IMR-90 (cell line): ENCODE measurements at regions of chr2 and their contacts with region 1.

Region 1: GRCh38 chr2:160970052-160970965 is 189.9 kb upstream of the TANK start:
- DNase-seq: peak; percentile 82
- ATAC-seq: peak; percentile 82
- H3K4me3 ChIP-seq: no peak overlapping the region
- H3K27ac ChIP-seq: peak overlapping the region; percentile 57; the same call in 1 of the 2 replicates
- H3K4me1 ChIP-seq: peaks cover 2% of the 10 kb centered on the region; the same call in 1 of the 2 replicates
- H3K27me3 ChIP-seq: no peaks in the 10 kb centered on the region
- CTCF ChIP-seq: peak; percentile 86
- POLR2A ChIP-seq: no peak
- RAD21 ChIP-seq: peak; percentile 88

Region 2: DNA sequence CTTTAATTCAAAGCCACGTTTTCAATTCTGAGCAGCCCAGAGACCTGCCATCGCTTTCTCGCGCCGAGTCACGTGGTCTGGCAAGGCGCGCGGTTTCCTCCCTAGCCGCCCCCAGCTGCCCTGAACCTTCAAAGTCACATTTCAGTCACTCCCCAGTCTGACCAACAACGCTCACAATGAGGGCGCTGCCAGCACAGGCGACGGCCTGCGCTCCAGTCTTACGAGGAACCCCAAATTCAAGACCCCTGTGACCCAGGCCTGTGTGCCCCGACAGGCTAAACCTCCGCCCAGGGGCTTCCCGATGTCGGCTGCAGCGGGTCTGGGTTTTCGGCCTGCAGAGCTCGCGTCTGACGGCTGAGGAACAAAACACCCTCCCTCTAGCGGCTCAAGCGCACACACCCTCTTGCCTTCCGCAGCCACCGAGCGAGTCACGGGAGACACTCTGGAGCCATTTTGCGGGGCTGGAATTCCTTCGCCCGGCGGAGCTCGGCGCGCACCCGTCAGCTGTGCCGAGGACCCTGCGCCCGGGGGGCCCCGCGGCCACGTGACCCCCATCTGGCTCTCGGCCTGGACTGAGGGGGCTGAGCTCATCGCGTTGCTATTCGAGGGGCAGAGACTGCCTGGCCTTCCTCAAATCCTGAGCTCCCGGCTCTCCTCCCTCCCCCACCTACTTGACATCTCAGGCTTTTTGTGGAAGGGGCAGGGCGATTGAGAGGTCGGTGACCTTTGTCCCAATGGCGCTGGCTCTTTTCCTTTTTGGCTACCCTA is 700.3 kb before region 1 on chr2:
- CTCF ChIA-PET with region 1: interaction called, 8 read pairs
- POLR2A ChIA-PET with region 1: interaction called, 5 read pairs
- dilution Hi-C with region 1: no loop called
- in situ Hi-C with region 1: no loop called
- intact Hi-C with region 1: loop called (anchors 1 kb)
- DNase-seq: peak; percentile 92
- ATAC-seq: peak; percentile 91
- H3K4me3 ChIP-seq: peak overlapping the region; percentile 43
- H3K27ac ChIP-seq: peak overlapping the region; percentile 86
- H3K4me1 ChIP-seq: peaks cover 20% of the 10 kb centered on the region
- H3K27me3 ChIP-seq: no peaks in the 10 kb centered on the region
- CTCF ChIP-seq: peak; percentile 68
- POLR2A ChIP-seq: no peak
- RAD21 ChIP-seq: peak; percentile 57

Region 3: DNA sequence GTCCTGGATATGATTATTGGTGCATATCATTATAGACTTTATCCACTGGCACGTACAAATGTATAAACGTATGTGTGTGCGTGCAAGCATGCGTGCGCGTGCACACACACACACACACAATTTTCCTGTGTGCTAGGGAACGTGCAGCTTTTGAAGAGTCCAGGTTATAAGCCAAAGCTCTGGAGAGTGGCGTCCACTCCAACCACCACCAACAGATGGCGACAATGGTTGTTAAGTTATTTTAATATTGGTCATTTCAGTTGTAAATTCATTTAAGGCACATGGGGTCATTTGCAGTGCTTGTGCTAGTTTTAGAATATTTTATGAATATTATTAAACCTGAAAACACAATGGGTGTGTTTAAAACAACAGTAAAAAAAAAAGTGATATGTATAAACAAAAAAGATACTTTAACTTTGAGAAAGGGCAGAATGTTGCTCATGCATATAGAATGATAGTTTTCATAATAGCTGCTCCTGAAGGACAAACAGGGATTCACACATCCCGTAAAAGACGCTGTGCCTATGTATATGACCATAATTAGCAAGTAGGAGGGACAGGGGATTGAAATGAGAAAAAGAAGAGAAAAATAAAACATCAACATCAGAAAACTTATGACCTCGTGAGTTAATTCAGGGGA is 646.0 kb before region 1 on chr2:
- CTCF ChIA-PET with region 1: interaction called, 3 read pairs
- POLR2A ChIA-PET with region 1: no interaction called
- dilution Hi-C with region 1: no loop called
- in situ Hi-C with region 1: no loop called
- intact Hi-C with region 1: loop called (anchors 5 kb)
- DNase-seq: peak; percentile 70
- ATAC-seq: peak; percentile 69
- H3K4me3 ChIP-seq: no peak overlapping the region
- H3K27ac ChIP-seq: no peak overlapping the region
- H3K4me1 ChIP-seq: peaks cover 19% of the 10 kb centered on the region
- H3K27me3 ChIP-seq: no peaks in the 10 kb centered on the region
- CTCF ChIP-seq: peak; percentile 71
- POLR2A ChIP-seq: no peak
- RAD21 ChIP-seq: peak; percentile 73

Region 4: DNA sequence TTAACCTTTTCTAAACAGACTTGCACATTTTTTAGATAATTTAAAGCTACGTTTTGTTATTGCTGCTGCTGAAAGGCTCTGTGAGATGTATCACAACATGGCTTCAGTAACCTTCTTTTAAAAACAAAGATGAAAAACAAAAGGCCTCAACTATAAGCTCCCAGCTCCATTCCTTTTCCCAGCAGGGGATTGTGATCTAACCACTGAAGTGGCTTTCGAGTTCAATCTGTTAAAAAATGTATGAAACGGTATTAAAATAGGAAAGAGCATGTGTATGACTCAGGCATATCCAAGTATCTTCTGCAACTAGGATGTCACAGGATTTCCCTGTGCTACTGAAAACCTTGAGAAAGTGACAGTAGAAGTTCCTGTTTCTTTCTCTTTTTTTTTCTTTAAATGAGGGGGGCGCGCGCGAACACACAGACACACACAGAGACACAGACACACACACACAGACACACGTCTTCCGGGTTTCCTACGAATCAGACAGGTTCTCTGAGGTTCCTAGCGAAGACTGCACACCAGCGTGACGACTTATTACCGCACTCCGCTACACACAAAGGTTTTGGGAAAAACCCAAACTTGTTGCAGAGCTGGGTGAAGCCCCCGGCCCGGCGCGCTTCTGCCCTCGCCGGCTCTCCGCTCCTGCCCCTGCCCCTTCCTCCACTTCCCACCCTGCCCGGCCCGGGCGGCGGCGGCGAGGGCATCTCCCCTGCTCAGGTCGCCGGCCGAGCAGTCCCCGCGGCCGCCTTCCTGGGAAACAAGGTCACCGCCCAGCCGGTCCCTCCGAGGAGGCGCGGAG is 563.5 kb before region 1 on chr2:
- CTCF ChIA-PET with region 1: interaction called, 3 read pairs
- POLR2A ChIA-PET with region 1: no interaction called
- dilution Hi-C with region 1: no loop called
- in situ Hi-C with region 1: loop called (anchors 10 kb)
- intact Hi-C with region 1: loop called (anchors 1 kb)
- DNase-seq: peak; percentile 80
- ATAC-seq: peak; percentile 12
- H3K4me3 ChIP-seq: peak overlapping the region; percentile 99
- H3K27ac ChIP-seq: peak overlapping the region; percentile 89
- H3K4me1 ChIP-seq: peaks cover 35% of the 10 kb centered on the region
- H3K27me3 ChIP-seq: no peaks in the 10 kb centered on the region
- CTCF ChIP-seq: no peak
- POLR2A ChIP-seq: peak; percentile 49
- RAD21 ChIP-seq: 0 out of 2 replicates have a peak, but pooled peaks have one; percentile 1

Region 5: GRCh38 chr2:160429248-160430000 is 540.9 kb before region 1 on chr2:
- CTCF ChIA-PET with region 1: interaction called, 3 read pairs
- POLR2A ChIA-PET with region 1: no interaction called
- dilution Hi-C with region 1: no loop called
- in situ Hi-C with region 1: no loop called
- intact Hi-C with region 1: loop called (anchors 1 kb)
- DNase-seq: peak; percentile 75
- ATAC-seq: no peak
- H3K4me3 ChIP-seq: no peak overlapping the region
- H3K27ac ChIP-seq: peak overlapping the region; percentile 56; the same call in 1 of the 2 replicates
- H3K4me1 ChIP-seq: peaks cover 16% of the 10 kb centered on the region
- H3K27me3 ChIP-seq: no peaks in the 10 kb centered on the region
- CTCF ChIP-seq: peak; percentile 56
- POLR2A ChIP-seq: no peak
- RAD21 ChIP-seq: peak; percentile 49

Region 6: DNA sequence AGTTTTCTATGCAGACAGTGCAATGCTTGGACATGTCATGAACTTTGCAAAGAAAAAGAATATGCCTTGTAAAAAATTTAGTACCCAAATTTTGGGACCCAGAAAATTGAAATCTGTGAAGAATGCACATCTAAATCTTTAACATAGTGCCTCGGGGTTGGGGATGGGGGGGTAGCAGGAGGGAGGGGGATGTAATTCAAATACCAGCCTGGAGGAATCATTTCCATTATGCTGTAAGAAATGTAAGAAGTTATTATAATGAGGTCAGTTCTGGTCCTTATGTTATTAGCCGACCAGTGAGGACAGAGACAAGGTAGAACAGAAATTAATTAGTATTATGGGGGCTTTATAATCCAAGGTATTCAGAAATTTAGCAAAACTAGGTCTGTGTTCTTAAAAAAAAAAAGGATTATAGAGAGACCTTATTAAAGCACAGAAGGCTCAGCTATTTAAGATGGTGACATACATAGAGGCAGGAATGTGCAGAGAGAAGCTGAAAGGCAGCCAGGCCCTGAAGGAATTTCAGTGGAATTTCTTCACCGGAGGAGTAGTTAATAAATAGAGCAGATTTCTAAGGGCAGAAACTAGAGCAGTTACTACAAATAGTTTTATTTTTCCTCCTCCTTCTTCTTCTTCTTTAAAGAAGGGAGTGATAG is 387.7 kb before region 1 on chr2:
- CTCF ChIA-PET with region 1: no interaction called
- POLR2A ChIA-PET with region 1: no interaction called
- dilution Hi-C with region 1: no loop called
- in situ Hi-C with region 1: no loop called
- intact Hi-C with region 1: loop called (anchors 5 kb)
- DNase-seq: peak; percentile 75
- ATAC-seq: peak; percentile 81
- H3K4me3 ChIP-seq: no peak overlapping the region
- H3K27ac ChIP-seq: peak overlapping the region; percentile 70; the same call in 1 of the 2 replicates
- H3K4me1 ChIP-seq: peaks cover 18% of the 10 kb centered on the region
- H3K27me3 ChIP-seq: no peaks in the 10 kb centered on the region
- CTCF ChIP-seq: 0 out of 2 replicates have a peak, but pooled peaks have one; percentile 2
- POLR2A ChIP-seq: no peak
- RAD21 ChIP-seq: no peak

Region 7: DNA sequence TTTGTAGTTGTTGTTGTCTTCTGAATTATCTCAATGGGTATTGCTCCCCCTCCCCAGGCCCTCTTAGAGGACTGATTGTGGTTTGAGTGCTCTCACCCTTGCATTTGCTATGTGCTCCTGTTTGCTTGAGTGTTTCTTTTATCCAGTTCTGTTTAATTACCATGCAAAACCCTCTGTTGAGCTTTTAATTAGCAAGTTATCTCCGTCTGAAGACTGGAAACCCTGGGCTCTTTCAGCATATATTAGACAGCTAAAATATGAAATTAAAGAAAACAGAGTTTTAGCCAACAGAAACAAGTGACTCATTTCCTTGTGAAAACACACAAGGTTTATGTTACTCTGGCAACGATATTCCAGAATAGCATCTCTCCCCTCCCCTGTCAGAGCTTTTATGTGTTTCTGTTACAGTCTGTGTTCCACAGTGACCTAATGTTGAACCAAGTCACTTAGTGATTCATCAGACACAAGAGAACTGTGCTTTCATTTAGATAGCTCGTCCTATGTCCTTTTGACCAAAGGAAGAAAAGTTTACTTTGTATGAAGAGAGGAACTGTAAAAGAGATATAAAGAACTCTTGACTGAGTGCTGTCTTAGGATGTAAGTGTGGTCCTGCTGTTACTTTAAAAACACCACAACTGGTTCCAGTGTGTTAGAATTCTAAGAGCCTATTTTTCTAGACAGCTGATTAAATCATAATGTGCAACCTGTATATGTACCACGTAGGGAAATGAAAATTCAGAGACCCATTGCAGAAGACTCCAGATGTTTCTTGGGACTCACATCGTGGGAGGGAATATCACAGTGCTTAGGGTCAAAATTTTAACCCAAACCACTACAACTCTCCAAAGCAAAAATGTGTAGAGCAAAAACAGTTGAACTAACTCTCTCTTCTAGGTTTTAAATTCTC is 303.9 kb before region 1 on chr2:
- CTCF ChIA-PET with region 1: interaction called, 5 read pairs
- POLR2A ChIA-PET with region 1: no interaction called
- dilution Hi-C with region 1: no loop called
- in situ Hi-C with region 1: no loop called
- intact Hi-C with region 1: loop called (anchors 10 kb)
- DNase-seq: peak; percentile 99
- ATAC-seq: peak; percentile 99
- H3K4me3 ChIP-seq: peak overlapping the region; percentile 12; the same call in 1 of the 2 replicates
- H3K27ac ChIP-seq: peak overlapping the region; percentile 60; the same call in 1 of the 2 replicates
- H3K4me1 ChIP-seq: peaks cover 2% of the 10 kb centered on the region
- H3K27me3 ChIP-seq: no peaks in the 10 kb centered on the region
- CTCF ChIP-seq: no peak
- POLR2A ChIP-seq: peak; percentile 18; the same call in 1 of the 2 replicates
- RAD21 ChIP-seq: peak; percentile 22; the same call in 1 of the 2 replicates